ENCODE measurements at regions of chr3 and their contacts with region 1.

Region 1: GRCh38 chr3:186930641-186931531 is 560 bp downstream of the ST6GAL1 start:
- DNase-seq: peak; percentile 70
- ATAC-seq: peak; percentile 71
- H3K4me3 Mint-ChIP-seq: peak overlapping the region; percentile 92
- H3K27ac Mint-ChIP-seq: peak overlapping the region; percentile 90
- H3K4me1 Mint-ChIP-seq: peaks cover 24% of the 10 kb centered on the region
- H3K27me3 Mint-ChIP-seq: no peaks in the 10 kb centered on the region

Region 2: DNA sequence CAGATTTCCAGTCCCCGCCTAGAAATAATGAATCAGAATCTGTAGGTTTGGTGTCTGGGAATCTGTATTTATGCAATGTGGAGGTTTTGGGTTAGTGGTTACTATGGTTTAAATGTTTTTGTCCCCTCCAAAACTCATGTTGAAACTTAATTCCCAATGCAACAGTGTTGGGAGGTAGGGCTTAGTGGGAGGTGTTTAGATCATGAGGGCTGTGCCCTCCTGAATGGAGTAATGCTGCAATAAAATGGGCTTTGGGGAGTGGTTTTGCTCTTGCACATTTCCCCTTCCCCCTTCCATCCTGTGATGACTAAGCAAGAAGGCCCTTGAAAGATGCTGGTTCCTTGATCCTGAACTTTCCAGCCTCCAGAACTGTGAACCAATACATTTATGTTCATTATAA is 115.5 kb before region 1 on chr3:
- POLR2A ChIA-PET with region 1: no interaction called
- DNase-seq: no peak
- ATAC-seq: no peak
- H3K4me3 Mint-ChIP-seq: no peak overlapping the region
- H3K27ac Mint-ChIP-seq: no peak overlapping the region
- H3K4me1 Mint-ChIP-seq: peaks cover 7% of the 10 kb centered on the region
- H3K27me3 Mint-ChIP-seq: no peaks in the 10 kb centered on the region

Region 3: DNA sequence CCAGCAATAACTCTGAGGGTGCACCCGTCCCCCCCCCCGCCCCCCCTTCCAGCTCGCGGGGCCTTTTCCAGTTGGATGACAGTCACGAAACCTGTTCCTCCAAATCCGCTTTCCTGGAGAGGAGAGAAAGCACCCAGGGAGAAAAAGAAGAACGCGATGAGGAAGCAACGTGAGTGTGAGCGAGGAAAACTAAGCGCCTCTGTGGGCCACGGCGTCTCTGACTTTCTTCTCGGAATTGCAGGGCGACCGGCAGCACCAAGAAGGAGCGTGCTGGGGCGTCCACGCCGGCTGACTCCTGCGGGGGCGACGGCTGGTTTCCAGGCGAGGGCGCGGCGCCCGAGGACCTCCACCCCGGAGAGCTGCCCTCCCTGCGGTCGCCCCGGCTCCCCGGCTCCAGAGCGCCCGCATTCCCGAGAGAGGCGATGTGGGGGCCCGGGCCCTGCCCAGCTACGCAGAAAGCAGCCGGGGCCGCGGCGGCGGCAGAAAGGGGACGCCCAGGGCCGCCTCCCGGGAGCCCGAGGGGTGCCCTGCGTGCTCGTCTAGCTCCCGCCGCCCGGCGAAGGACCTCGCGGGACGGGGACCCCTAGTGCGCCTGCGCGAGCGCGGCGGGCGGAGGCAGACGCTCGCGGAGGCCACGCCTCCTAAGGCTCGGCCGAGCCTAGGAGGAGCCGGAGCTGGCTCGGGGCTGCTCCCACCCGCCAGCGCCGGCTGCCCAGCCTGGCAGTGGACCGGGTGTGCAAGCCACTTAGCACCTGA is 103.7 kb before region 1 on chr3:
- POLR2A ChIA-PET with region 1: interaction called, 11 read pairs
- DNase-seq: peak; percentile 94
- ATAC-seq: peak; percentile 92
- H3K4me3 Mint-ChIP-seq: peak overlapping the region; percentile 83
- H3K27ac Mint-ChIP-seq: peak overlapping the region; percentile 67
- H3K4me1 Mint-ChIP-seq: peaks cover 24% of the 10 kb centered on the region
- H3K27me3 Mint-ChIP-seq: peaks cover 45% of the 10 kb centered on the region

Region 4: DNA sequence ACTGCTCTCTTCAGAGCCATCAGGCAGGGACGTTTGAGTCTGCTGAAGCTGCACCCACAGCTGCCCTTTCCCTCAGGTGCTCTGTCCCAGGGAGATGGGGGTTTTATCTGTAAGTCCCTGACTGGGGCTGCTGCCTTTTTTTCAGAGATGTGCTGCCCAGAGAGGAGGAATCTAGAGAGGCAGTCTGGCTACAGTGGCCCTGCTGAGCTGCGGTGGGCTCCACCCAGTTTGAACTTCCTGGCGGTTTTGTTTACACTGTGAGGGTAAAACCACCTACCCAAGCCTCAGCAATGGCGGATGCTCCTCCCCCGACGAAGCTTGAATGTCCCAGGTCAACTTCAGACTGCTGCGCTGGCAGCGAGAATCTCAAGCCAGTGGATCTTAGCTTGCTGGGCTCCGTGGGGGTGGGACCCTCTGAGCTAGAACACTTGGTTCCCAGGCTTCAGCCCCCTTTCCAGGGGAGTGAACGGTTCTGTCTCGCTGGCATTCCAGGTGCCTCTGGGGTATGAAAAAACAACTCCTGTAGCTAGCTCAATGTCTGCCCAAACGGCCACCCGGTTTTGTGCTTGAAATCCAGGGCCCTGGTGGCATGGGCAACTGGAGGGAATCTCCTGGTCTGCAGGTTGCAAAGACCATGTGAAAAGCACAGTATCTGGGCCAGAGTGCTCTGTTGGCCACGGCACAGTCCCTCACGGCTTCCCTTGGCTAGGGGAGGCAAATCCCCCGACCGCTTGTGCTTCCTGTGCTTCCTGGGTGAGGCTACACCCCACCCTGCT is 21.6 kb before region 1 on chr3:
- POLR2A ChIA-PET with region 1: interaction called, 40 read pairs
- DNase-seq: peak; percentile 81
- ATAC-seq: peak; percentile 85
- H3K4me3 Mint-ChIP-seq: peak overlapping the region; percentile 74
- H3K27ac Mint-ChIP-seq: peak overlapping the region; percentile 94
- H3K4me1 Mint-ChIP-seq: peaks cover 31% of the 10 kb centered on the region
- H3K27me3 Mint-ChIP-seq: peaks cover 2% of the 10 kb centered on the region

Region 5: GRCh38 chr3:187025656-187026316 is 94.9 kb after region 1 on chr3:
- POLR2A ChIA-PET with region 1: interaction called, 49 read pairs
- DNase-seq: peak; percentile 53
- ATAC-seq: peak; percentile 22
- H3K4me3 Mint-ChIP-seq: peak overlapping the region; percentile 88
- H3K27ac Mint-ChIP-seq: peak overlapping the region; percentile 97
- H3K4me1 Mint-ChIP-seq: peaks cover 50% of the 10 kb centered on the region
- H3K27me3 Mint-ChIP-seq: no peaks in the 10 kb centered on the region

Region 6: GRCh38 chr3:187139126-187139894 is 208.4 kb after region 1 on chr3 and contains the start of gene RPL39L:
- POLR2A ChIA-PET with region 1: interaction called, 11 read pairs
- DNase-seq: peak; percentile 98
- ATAC-seq: peak; percentile 94
- H3K4me3 Mint-ChIP-seq: peak within 1 kb of the TSS; percentile 95
- H3K27ac Mint-ChIP-seq: peak within 1 kb of the TSS; percentile 99
- H3K4me1 Mint-ChIP-seq: peaks cover 16% of the 10 kb centered on the region
- H3K27me3 Mint-ChIP-seq: no peaks in the 10 kb centered on the region
- total RNA-seq, gene RPL39L: 18.8 TPM

Measured in activated naive CD8-positive, alpha-beta T cell treated with anti-CD3 and anti-CD28 coated beads, Interleukin-2, amount 10 ng/mL, durations not matched to agents 7 days and 5 days (primary cell).